ENCODE measurements at regions of chr10 and their contacts with region 1.

Region 1: GRCh38 chr10:124152916-124153826 is 59.8 kb upstream of the CHST15 start:
- DNase-seq: peak; percentile 47 to 75 (median 56)
- ATAC-seq: peak in 3 of 4 donors; percentile 67 to 80 (median 71)
- H3K4me3 ChIP-seq: peak overlapping the region in 1 of 12 donors; percentile 2
- H3K27ac ChIP-seq: peak overlapping the region in 9 of 12 donors; percentile 20 to 83 (median 46)
- H3K4me1 ChIP-seq: peaks cover 13 to 62% (median 38%) of the 10 kb centered on the region in 12 donors
- H3K27me3 ChIP-seq: no peaks in the 10 kb centered on the region
- CTCF ChIP-seq: no peak
- POLR2A ChIP-seq: no peak

Region 2: GRCh38 chr10:123897146-123897545 is 256.0 kb before region 1 on chr10:
- intact Hi-C with region 1: no loop called
- DNase-seq: no peak
- ATAC-seq: no peak
- H3K4me3 ChIP-seq: no peak overlapping the region
- H3K27ac ChIP-seq: no peak overlapping the region
- H3K4me1 ChIP-seq: no peaks in the 10 kb centered on the region
- H3K27me3 ChIP-seq: peaks cover 0 to 24% (median 3%) of the 10 kb centered on the region in 9 donors
- CTCF ChIP-seq: peak in 3 of 12 donors; percentile 27 to 34 (median 28)
- POLR2A ChIP-seq: no peak

Region 3: GRCh38 chr10:124092860-124093773 is 60.1 kb before region 1 on chr10 and contains the start of gene CHST15:
- intact Hi-C with region 1: loop called in 4 of 10 experiments (anchors 2 to 10 kb)
- DNase-seq: peak; percentile 38 to 75 (median 50)
- ATAC-seq: peak in 3 of 4 donors; percentile 23 to 54 (median 46)
- H3K4me3 ChIP-seq: peak within 1 kb of the TSS; percentile 29 to 83 (median 64)
- H3K27ac ChIP-seq: peak within 1 kb of the TSS; percentile 59 to 95 (median 79)
- H3K4me1 ChIP-seq: peaks cover 0 to 41% (median 22%) of the 10 kb centered on the region in 12 donors
- H3K27me3 ChIP-seq: peaks cover 0 to 53% (median 8%) of the 10 kb centered on the region in 9 donors
- CTCF ChIP-seq: peak in 5 of 12 donors; percentile 6 to 29 (median 23)
- POLR2A ChIP-seq: peak in 1 of 2 donors; percentile 17
- total RNA-seq, gene CHST15: 3.4 to 27.1 (median 4.2) TPM

Region 4: DNA sequence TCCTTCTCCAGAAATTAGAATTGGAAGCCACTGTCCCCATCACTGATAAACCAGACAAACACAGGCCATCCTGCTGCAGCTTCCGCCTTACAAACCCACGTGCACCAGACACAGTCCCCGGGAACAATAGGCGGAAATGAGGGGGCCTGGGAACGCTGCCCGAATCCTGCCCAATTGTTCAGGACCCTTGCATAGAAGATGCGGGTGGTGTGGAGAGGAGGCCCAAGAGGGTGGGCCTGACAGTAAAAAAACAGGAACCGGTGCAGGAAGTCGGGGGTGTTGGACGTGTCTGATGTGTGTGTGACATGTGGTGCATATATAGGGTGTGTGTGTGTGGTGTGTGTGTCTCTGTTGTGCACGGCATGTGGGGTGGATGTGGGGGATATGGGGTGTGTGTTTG is 33.2 kb before region 1 on chr10:
- intact Hi-C with region 1: loop called in 2 of 10 experiments (anchors 2 to 5 kb)
- DNase-seq: peak; percentile 73 to 83 (median 79)
- ATAC-seq: peak; percentile 59 to 94 (median 78)
- H3K4me3 ChIP-seq: no peak overlapping the region
- H3K27ac ChIP-seq: peak overlapping the region in 8 of 12 donors; percentile 29 to 71 (median 58)
- H3K4me1 ChIP-seq: peaks cover 5 to 36% (median 19%) of the 10 kb centered on the region in 12 donors
- H3K27me3 ChIP-seq: no peaks in the 10 kb centered on the region
- CTCF ChIP-seq: no peak
- POLR2A ChIP-seq: no peak

Region 5: DNA sequence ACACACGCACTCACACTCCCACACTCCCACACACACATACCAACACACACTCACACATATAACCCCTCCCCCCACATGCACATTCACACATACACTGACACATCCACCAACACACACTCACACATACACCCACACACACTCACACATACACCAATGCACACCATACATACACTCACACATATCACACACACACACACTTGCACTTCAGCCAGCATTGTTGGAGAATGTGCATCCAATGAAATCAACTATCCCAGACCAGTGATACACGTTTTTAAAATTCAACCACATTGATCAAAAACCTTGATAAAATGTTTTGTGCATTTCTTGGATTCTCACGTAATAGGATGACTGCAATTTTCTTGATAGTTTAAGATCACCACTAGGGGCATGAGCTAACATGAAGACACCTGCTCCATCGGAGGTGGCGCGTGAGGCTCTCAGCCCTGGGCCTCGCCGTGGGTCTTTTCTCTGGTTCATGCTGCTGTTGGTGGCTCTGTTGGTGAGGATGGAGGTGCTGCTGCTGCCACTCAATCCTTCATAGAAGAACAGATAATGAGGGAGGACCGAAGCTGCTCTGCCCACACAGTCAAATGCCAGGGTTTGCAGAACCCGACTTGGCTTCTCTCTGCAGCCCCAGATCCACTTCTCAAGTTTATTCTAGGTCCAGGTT is 27.6 kb before region 1 on chr10:
- intact Hi-C with region 1: loop called in 1 of 10 experiments (anchors 2 kb)
- DNase-seq: no peak
- ATAC-seq: no peak
- H3K4me3 ChIP-seq: no peak overlapping the region
- H3K27ac ChIP-seq: no peak overlapping the region
- H3K4me1 ChIP-seq: peaks cover 0 to 9% (median 1%) of the 10 kb centered on the region in 12 donors
- H3K27me3 ChIP-seq: no peaks in the 10 kb centered on the region
- CTCF ChIP-seq: peak in 8 of 12 donors; percentile 12 to 30 (median 23)
- POLR2A ChIP-seq: no peak